ENCODE measurements at regions of chr17 and their contacts with region 1.

Region 1: DNA sequence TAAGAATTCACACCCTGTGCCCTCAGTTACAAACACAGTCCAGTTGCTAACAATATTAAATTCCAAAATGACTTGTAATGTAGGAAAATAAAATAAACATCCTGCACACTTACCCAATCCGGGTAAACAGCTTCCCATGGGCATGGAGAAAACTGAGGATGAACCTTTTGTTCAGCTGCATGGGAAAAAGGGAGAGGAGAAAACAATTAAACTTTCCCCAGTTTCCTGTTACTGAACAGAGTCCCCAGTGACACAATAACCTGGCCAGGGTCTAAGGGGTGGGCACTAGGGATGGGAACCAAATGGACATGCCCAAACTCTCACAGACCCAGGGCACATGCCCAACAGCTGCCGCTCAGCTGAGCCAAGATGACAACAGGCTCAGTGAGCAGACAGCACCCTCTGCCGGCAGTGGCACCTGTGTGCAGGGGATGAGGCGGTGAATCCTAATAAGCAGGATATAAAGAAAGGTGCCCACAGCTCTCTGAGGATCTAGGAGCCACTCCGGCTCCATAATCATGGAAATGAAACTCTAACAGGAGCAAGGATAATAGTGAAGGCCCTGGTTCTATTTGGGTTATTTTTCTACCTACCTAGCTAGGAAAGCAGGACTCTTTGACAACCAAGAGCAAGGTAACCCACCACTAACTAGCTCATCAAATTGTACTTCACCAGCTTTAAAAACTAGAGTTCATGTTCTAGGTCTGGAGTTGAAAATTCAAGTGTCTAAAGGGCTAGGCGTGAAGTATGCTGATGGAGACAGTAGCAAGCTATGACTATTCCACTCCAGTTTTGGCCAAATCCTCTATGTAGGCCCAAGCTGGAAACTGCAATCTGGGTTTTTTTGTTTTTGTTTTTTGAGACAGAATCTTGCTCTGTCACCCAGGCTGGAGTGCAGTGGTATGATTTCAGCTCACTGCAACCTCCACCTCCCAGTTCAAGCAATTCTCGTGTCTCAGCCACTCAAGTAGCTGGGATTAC is 58.8 kb downstream of the SMG6 start:
- DNase-seq: peak; percentile 78
- CTCF ChIP-seq: peak; percentile 100

Region 2: DNA sequence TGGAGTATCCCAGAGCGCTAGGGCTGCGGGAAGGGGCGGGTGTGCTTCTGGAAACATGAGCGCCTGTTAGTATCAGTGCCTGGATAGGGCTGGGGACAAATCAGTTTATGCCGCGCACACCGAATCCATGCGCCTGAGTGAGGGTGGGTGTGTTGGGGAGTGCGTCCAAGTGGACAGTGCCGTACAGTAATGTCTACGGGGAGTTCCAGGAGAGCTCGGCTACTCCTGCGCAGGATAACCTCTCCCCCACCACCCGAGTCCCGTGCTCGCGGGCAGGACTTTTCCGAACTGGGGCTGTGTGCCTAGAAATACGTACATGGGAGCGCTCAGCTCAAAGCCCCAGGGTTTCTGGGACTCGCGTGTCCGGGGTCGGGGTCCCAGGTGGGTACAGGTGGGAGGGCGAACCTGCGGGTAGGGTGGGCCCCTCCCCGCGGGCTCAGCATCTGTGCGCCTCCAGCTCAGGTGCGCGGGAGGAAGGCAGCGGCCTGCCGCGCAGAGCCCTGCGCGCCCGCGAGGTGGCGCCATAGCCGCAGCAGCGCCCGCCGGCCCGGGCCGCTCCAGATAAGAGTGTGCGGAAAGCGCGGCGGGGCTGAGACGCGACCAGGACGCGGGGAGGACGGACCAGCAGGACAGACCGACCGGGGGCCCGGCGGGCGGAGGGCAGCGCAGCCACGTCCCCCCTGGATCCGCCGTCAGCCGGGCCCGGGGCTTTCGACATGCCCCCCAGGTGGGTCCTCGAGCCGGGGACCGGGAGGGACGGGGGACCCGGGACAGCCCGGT is 190.1 kb before region 1 on chr17 and contains the start of gene HIC1:
- CTCF ChIA-PET with region 1: interaction called, 205 read pairs
- POLR2A ChIA-PET with region 1: interaction called, 9 read pairs
- DNase-seq: peak; percentile 83
- CTCF ChIP-seq: peak; percentile 94

Region 3: GRCh38 chr17:2087597-2088211 is 157.1 kb before region 1 on chr17:
- CTCF ChIA-PET with region 1: interaction called, 54 read pairs
- POLR2A ChIA-PET with region 1: interaction called, 3 read pairs
- DNase-seq: peak; percentile 68
- CTCF ChIP-seq: no peak

Region 4: DNA sequence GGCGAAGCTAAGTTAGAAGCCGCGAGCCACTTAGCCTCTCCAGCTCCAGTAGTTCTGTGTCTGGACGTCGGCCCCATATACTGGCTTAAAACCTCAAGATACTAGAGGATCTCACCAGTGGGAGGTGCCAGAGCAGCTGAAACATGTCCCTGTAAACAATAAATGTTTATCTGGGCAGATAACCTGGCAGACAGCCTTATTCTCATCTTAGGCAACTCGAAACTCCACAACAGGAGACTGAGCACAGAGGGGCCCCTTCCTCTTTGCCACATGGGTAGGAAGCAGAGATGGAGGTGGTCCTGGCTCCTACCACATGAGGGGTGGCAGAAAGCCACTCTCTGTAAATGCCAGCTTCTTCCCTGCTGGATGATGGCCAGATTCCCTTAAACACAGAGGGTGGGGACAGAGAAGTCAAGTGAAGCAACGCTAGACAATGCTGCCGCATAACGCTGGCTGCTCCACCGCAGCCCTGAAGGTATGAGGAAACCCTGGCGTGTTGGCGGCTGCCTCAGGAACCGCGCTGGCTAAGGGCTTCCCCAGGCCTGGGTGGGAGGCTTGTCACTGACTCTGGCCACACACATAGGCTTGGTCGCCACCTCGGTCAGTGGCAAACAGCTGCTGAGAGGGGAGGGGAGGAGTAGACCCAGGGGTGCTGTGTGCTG is 122.1 kb before region 1 on chr17:
- CTCF ChIA-PET with region 1: interaction called, 18 read pairs
- POLR2A ChIA-PET with region 1: no interaction called
- DNase-seq: peak; percentile 56
- CTCF ChIP-seq: no peak

Region 5: GRCh38 chr17:2195729-2196128 is 49.1 kb before region 1 on chr17:
- CTCF ChIA-PET with region 1: interaction called, 11 read pairs
- POLR2A ChIA-PET with region 1: no interaction called
- DNase-seq: peak; percentile 43
- CTCF ChIP-seq: no peak

Region 6: GRCh38 chr17:2222901-2223616 is 21.8 kb before region 1 on chr17:
- CTCF ChIA-PET with region 1: interaction called, 76 read pairs
- POLR2A ChIA-PET with region 1: interaction called, 3 read pairs
- DNase-seq: peak; percentile 50
- CTCF ChIP-seq: no peak

Region 7: GRCh38 chr17:2266045-2266864 is 21.4 kb after region 1 on chr17:
- CTCF ChIA-PET with region 1: interaction called, 50 read pairs
- POLR2A ChIA-PET with region 1: no interaction called
- DNase-seq: peak; percentile 55
- CTCF ChIP-seq: no peak

Region 8: GRCh38 chr17:2323629-2324314 is 78.9 kb after region 1 on chr17:
- CTCF ChIA-PET with region 1: no interaction called
- POLR2A ChIA-PET with region 1: no interaction called
- DNase-seq: no peak
- CTCF ChIP-seq: no peak

Measured in GM10248 (cell line).